WTC11 (cell line): ENCODE measurements at regions of chr12 and their contacts with region 1.

Region 1: GRCh38 chr12:119642986-119643385 is 24.9 kb upstream of the PRKAB1 start:
- DNase-seq: peak; percentile 60
- ATAC-seq: peak; percentile 74
- H3K4me3 Mint-ChIP-seq: no peak overlapping the region
- H3K27ac Mint-ChIP-seq: no peak overlapping the region
- H3K4me1 Mint-ChIP-seq: no peaks in the 10 kb centered on the region
- H3K27me3 Mint-ChIP-seq: peaks cover 7% of the 10 kb centered on the region; the same call in 1 of the 2 replicates
- CTCF ChIP-seq: peak; percentile 74

Region 2: GRCh38 chr12:119444456-119445044 is 198.4 kb before region 1 on chr12:
- CTCF ChIA-PET with region 1: interaction called, 16 read pairs
- POLR2A ChIA-PET with region 1: no interaction called
- DNase-seq: peak; percentile 79
- ATAC-seq: peak; percentile 94
- H3K4me3 Mint-ChIP-seq: peak overlapping the region; percentile 57
- H3K27ac Mint-ChIP-seq: no peak overlapping the region
- H3K4me1 Mint-ChIP-seq: peaks cover 11% of the 10 kb centered on the region
- H3K27me3 Mint-ChIP-seq: no peaks in the 10 kb centered on the region; the same call in 1 of the 2 replicates
- CTCF ChIP-seq: peak; percentile 99

Region 3: GRCh38 chr12:119576118-119576810 is 66.7 kb before region 1 on chr12:
- CTCF ChIA-PET with region 1: interaction called, 12 read pairs
- POLR2A ChIA-PET with region 1: no interaction called
- DNase-seq: no peak
- ATAC-seq: no peak
- H3K4me3 Mint-ChIP-seq: no peak overlapping the region
- H3K27ac Mint-ChIP-seq: no peak overlapping the region
- H3K4me1 Mint-ChIP-seq: no peaks in the 10 kb centered on the region
- H3K27me3 Mint-ChIP-seq: 0 out of 2 replicates have a peak, but pooled peaks cover 4% of the 10 kb centered on the region
- CTCF ChIP-seq: no peak

Region 4: GRCh38 chr12:119631930-119632678 is 10.9 kb before region 1 on chr12:
- CTCF ChIA-PET with region 1: interaction called, 33 read pairs
- POLR2A ChIA-PET with region 1: no interaction called
- DNase-seq: no peak
- ATAC-seq: no peak
- H3K4me3 Mint-ChIP-seq: no peak overlapping the region
- H3K27ac Mint-ChIP-seq: no peak overlapping the region
- H3K4me1 Mint-ChIP-seq: peaks cover 6% of the 10 kb centered on the region
- H3K27me3 Mint-ChIP-seq: peaks cover 7% of the 10 kb centered on the region
- CTCF ChIP-seq: no peak

Region 5: GRCh38 chr12:119667577-119668323 is 24.8 kb after region 1 on chr12 and contains the start of gene PRKAB1:
- CTCF ChIA-PET with region 1: interaction called, 20 read pairs
- POLR2A ChIA-PET with region 1: no interaction called
- DNase-seq: peak; percentile 96
- ATAC-seq: peak; percentile 96
- H3K4me3 Mint-ChIP-seq: peak within 1 kb of the TSS; percentile 93
- H3K27ac Mint-ChIP-seq: peak within 1 kb of the TSS; percentile 85
- H3K4me1 Mint-ChIP-seq: peaks cover 13% of the 10 kb centered on the region
- H3K27me3 Mint-ChIP-seq: peaks cover 3% of the 10 kb centered on the region
- CTCF ChIP-seq: peak; percentile 50
- total RNA-seq, gene PRKAB1: 26.2 to 32.3 TPM (median 26.4 TPM) in 3 replicates